Activated CD8-positive, alpha-beta T cell treated with anti-CD3 and anti-CD28 coated beads, Interleukin-2, amount 10 ng/mL, durations not matched to agents 7 days and 5 days (primary cell): ENCODE measurements at regions of chr5 and their contacts with region 1.

Region 1: DNA sequence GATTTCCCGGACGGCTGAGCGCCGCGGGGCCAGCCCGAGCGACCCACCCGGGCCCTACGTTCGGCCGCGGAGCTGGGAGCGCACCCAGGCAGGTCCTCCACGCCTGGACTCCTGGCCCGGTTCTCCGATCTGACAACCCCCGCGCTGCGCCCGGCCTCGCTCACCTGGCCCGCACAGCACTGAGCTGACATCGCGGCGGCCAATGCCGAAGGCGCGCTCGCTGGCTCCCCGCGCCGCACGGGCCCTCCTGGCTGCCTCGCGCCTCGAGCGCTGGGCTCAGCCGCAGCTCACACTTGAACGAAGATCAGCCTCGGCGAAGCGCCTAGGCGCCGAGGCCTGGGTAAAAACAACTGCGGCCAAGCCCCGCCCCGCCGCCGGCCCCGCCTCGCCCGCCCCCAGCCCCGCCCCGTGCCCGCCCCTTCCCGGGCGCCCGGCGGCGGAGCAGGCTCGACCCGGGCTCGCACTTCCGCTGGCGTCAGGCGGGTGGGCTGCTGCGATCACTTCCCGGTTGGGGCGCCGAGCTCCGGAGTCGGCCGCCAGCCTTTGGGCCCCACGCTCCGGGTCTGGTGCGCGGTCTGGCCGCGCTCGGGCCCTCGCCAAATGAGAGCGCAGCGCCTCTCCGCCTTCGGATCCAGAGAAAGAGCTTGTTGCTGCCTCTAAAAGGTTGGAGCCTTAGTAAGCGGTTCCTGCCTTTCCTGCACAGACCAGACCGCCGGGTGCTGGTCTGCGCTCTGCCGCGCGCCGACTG is at the start of gene SERINC5:
- DNase-seq: peak; percentile 88
- ATAC-seq: peak; percentile 80
- H3K4me3 Mint-ChIP-seq: peak within 1 kb of the TSS; percentile 92
- H3K27ac Mint-ChIP-seq: peak within 1 kb of the TSS; percentile 95
- H3K4me1 Mint-ChIP-seq: peaks cover 51% of the 10 kb centered on the region
- H3K27me3 Mint-ChIP-seq: no peaks in the 10 kb centered on the region
- total RNA-seq, gene SERINC5: 52.5 to 54.5 TPM

Region 2: DNA sequence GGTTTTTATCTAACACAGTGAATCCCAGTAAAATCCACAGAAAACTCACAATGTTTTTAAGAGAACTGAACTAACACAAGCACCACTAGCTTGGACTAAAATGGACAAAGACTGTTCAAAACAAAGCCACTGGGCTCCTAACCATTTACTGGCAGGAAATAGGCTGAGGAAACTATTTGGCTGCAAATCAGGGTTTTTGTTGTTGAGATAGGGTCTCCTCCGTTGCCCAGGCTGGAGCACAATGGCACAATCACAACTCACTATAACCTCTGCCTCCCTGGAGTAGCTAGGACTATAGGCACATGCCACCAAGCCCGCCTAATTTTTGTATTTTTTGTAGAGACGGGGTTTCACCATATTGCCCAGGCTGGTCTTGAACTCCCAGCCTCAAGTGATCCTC is 121.0 kb before region 1 on chr5:
- CTCF ChIA-PET with region 1: interaction called, 4 read pairs
- POLR2A ChIA-PET with region 1: interaction called, 13 read pairs
- DNase-seq: no peak
- ATAC-seq: no peak
- H3K4me3 Mint-ChIP-seq: no peak overlapping the region
- H3K27ac Mint-ChIP-seq: peak overlapping the region; percentile 90
- H3K4me1 Mint-ChIP-seq: peaks cover 63% of the 10 kb centered on the region
- H3K27me3 Mint-ChIP-seq: no peaks in the 10 kb centered on the region

Region 3: DNA sequence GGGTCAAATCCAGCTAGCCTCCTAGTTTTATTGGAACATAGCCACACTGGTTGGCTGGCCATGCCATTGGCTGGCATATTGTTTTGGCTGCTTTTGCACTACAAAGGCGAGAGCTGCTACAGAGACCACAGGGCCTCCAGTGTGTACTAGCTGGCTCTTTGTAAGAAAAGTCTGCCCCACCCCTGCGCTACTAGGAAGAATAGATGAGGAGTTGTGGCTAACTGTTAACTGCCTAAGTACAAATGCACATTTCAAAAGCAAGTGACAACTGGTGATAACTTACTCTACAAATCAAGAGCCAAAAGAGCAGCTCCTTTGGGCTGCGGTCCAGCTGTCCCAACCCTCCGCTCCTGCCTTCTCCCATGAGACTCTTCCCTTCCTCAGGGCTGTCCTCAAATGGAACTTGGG is 63.9 kb before region 1 on chr5:
- CTCF ChIA-PET with region 1: interaction called, 30 read pairs
- POLR2A ChIA-PET with region 1: interaction called, 78 read pairs
- DNase-seq: peak; percentile 78
- ATAC-seq: peak; percentile 73
- H3K4me3 Mint-ChIP-seq: peak overlapping the region; percentile 64
- H3K27ac Mint-ChIP-seq: peak overlapping the region; percentile 94
- H3K4me1 Mint-ChIP-seq: peaks cover 81% of the 10 kb centered on the region
- H3K27me3 Mint-ChIP-seq: no peaks in the 10 kb centered on the region

Region 4: GRCh38 chr5:80216753-80217596 is 38.9 kb before region 1 on chr5:
- CTCF ChIA-PET with region 1: interaction called, 6 read pairs
- POLR2A ChIA-PET with region 1: interaction called, 36 read pairs
- DNase-seq: peak; percentile 50
- ATAC-seq: peak; percentile 41
- H3K4me3 Mint-ChIP-seq: peak overlapping the region; percentile 54
- H3K27ac Mint-ChIP-seq: peak overlapping the region; percentile 76
- H3K4me1 Mint-ChIP-seq: peaks cover 80% of the 10 kb centered on the region
- H3K27me3 Mint-ChIP-seq: no peaks in the 10 kb centered on the region

Region 5: GRCh38 chr5:80268916-80269315 is 13.0 kb after region 1 on chr5:
- CTCF ChIA-PET with region 1: interaction called, 14 read pairs
- POLR2A ChIA-PET with region 1: interaction called, 31 read pairs
- DNase-seq: no peak
- ATAC-seq: peak; percentile 35
- H3K4me3 Mint-ChIP-seq: peak overlapping the region; percentile 66
- H3K27ac Mint-ChIP-seq: peak overlapping the region; percentile 95
- H3K4me1 Mint-ChIP-seq: peaks cover 43% of the 10 kb centered on the region
- H3K27me3 Mint-ChIP-seq: no peaks in the 10 kb centered on the region